ENCODE measurements at regions of chr1 and their contacts with region 1.

Region 1: GRCh38 chr1:64755361-64755760 is 10.5 kb downstream of the RAVER2 start:
- DNase-seq: peak; percentile 35
- H3K4me3 ChIP-seq: peak overlapping the region in 1 of 3 experiments; percentile 6
- H3K27ac ChIP-seq: no peak overlapping the region
- H3K4me1 ChIP-seq: peaks cover 8% of the 10 kb centered on the region
- H3K27me3 ChIP-seq: no peaks in the 10 kb centered on the region
- CTCF ChIP-seq: no peak
- POLR2A ChIP-seq: no peak

Region 2: GRCh38 chr1:64809309-64809708 is 53.9 kb after region 1 on chr1:
- CTCF ChIA-PET with region 1: interaction called, 12 read pairs
- POLR2A ChIA-PET with region 1: no interaction called
- dilution Hi-C with region 1: no loop called
- intact Hi-C with region 1: no loop called
- DNase-seq: no peak
- H3K4me3 ChIP-seq: no peak overlapping the region
- H3K27ac ChIP-seq: no peak overlapping the region
- H3K4me1 ChIP-seq: no peaks in the 10 kb centered on the region
- H3K27me3 ChIP-seq: no peaks in the 10 kb centered on the region
- CTCF ChIP-seq: no peak
- POLR2A ChIP-seq: no peak